ENCODE measurements at regions of chr14 and their contacts with region 1.

Region 1: GRCh38 chr14:24332268-24332993 is 2.4 kb downstream of the ADCY4 start:
- DNase-seq: peak; percentile 74 to 95 (median 84)
- ATAC-seq: peak; percentile 87
- H3K4me3 ChIP-seq: peak overlapping the region; percentile 43 to 48
- H3K4me3 Mint-ChIP-seq: peak overlapping the region; percentile 88
- H3K27ac ChIP-seq: no peak overlapping the region
- H3K27ac Mint-ChIP-seq: peak overlapping the region; percentile 70
- H3K4me1 ChIP-seq: peaks cover 60% of the 10 kb centered on the region
- H3K4me1 Mint-ChIP-seq: peaks cover 66% of the 10 kb centered on the region
- H3K27me3 ChIP-seq: peaks cover 7 to 23% of the 10 kb centered on the region in 2 experiments
- H3K27me3 Mint-ChIP-seq: peaks cover 26% of the 10 kb centered on the region
- CTCF ChIP-seq: peak; percentile 76

Region 2: DNA sequence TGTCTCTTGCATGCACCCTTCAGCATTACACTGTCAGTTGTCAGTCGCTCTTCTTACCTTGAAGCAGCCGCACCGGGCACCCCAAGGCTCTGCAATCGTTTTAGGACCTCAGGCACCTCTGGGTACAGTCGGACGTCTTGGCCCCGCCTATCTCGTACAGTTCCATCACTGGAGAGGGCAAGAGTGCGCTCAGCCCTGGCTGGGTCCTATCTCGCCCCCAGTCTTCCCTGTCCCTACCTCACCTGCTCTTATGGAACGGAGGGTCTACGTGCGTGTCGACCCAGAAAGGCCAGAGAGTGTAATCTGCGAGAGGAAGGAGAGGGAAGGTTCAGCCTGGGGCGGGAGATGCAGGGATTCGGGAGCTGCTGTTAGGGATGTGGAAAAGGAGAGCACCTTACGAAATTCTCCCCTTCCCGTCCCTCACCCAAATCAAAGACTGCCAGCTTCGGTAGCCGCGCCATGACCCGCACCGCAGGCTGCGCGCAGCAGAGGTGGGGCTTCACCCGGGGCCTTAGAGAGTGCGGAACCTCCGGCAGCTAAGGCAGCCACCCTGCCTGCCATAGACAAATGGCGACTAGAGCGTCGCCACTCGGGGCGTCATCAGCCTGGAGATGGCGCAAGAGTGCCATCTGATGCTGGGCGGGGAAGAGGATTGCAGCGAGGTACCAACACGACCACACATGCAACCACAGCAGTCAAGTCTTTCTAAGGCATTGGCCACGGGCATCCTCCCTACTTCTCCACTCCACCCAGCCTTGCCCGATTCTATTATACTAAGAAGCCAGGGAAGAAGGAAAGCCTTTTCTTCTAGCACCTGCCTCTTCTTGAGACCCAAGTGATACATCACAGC is 116.7 kb before region 1 on chr14 and contains the start of gene MDP1:
- CTCF ChIA-PET with region 1: interaction called, 9 read pairs
- POLR2A ChIA-PET with region 1: no interaction called
- intact Hi-C with region 1: loop called in 1 of 2 experiments (anchors 1 kb)
- DNase-seq: peak; percentile 75 to 96 (median 88)
- ATAC-seq: peak; percentile 72
- H3K4me3 ChIP-seq: peak within 1 kb of the TSS; percentile 86 to 95
- H3K4me3 Mint-ChIP-seq: peak within 1 kb of the TSS; percentile 93
- H3K27ac ChIP-seq: peak within 1 kb of the TSS; percentile 87 to 97
- H3K27ac Mint-ChIP-seq: peak within 1 kb of the TSS; percentile 99
- H3K4me1 ChIP-seq: peaks cover 32% of the 10 kb centered on the region
- H3K4me1 Mint-ChIP-seq: peaks cover 52% of the 10 kb centered on the region
- H3K27me3 ChIP-seq: no peaks in the 10 kb centered on the region
- H3K27me3 Mint-ChIP-seq: no peaks in the 10 kb centered on the region
- CTCF ChIP-seq: peak; percentile 63
- total RNA-seq, gene MDP1: 4.2 to 4.5 TPM

Region 3: GRCh38 chr14:24299255-24300195 is 32.9 kb before region 1 on chr14 and contains the starts of genes DHRS1 and NOP9:
- CTCF ChIA-PET with region 1: interaction called, 25 read pairs
- POLR2A ChIA-PET with region 1: interaction called, 3 read pairs
- intact Hi-C with region 1: loop called in 1 of 2 experiments (anchors 2 kb)
- DNase-seq: peak; percentile 82 to 98 (median 92)
- ATAC-seq: peak; percentile 78
- H3K4me3 ChIP-seq: peak within 1 kb of the TSS; percentile 80 to 83
- H3K4me3 Mint-ChIP-seq: peak within 1 kb of the TSS; percentile 94
- H3K27ac ChIP-seq: peak within 1 kb of the TSS; percentile 80 to 85
- H3K27ac Mint-ChIP-seq: peak within 1 kb of the TSS; percentile 96
- H3K4me1 ChIP-seq: peaks cover 28% of the 10 kb centered on the region
- H3K4me1 Mint-ChIP-seq: peaks cover 51% of the 10 kb centered on the region
- H3K27me3 ChIP-seq: no peaks in the 10 kb centered on the region
- H3K27me3 Mint-ChIP-seq: no peaks in the 10 kb centered on the region
- CTCF ChIP-seq: no peak
- total RNA-seq, gene DHRS1: 24.3 to 28.5 TPM
- total RNA-seq, gene NOP9: 35.6 to 35.8 TPM

Region 4: GRCh38 chr14:24347134-24347533 is 14.7 kb after region 1 on chr14:
- CTCF ChIA-PET with region 1: interaction called, 12 read pairs
- POLR2A ChIA-PET with region 1: no interaction called
- intact Hi-C with region 1: no loop called
- DNase-seq: no peak
- ATAC-seq: no peak
- H3K4me3 ChIP-seq: no peak overlapping the region
- H3K4me3 Mint-ChIP-seq: no peak overlapping the region
- H3K27ac ChIP-seq: no peak overlapping the region
- H3K27ac Mint-ChIP-seq: no peak overlapping the region
- H3K4me1 ChIP-seq: no peaks in the 10 kb centered on the region
- H3K4me1 Mint-ChIP-seq: no peaks in the 10 kb centered on the region
- H3K27me3 ChIP-seq: peaks cover 3 to 4% of the 10 kb centered on the region in 2 experiments
- H3K27me3 Mint-ChIP-seq: peaks cover 49% of the 10 kb centered on the region
- CTCF ChIP-seq: no peak

Region 5: GRCh38 chr14:24411443-24412389 is 79.3 kb after region 1 on chr14:
- CTCF ChIA-PET with region 1: interaction called, 15 read pairs
- POLR2A ChIA-PET with region 1: no interaction called
- intact Hi-C with region 1: no loop called
- DNase-seq: peak in 3 of 9 experiments; percentile 35 to 59 (median 51)
- ATAC-seq: peak; percentile 59
- H3K4me3 ChIP-seq: no peak overlapping the region
- H3K4me3 Mint-ChIP-seq: no peak overlapping the region
- H3K27ac ChIP-seq: no peak overlapping the region
- H3K27ac Mint-ChIP-seq: no peak overlapping the region
- H3K4me1 ChIP-seq: no peaks in the 10 kb centered on the region
- H3K4me1 Mint-ChIP-seq: no peaks in the 10 kb centered on the region
- H3K27me3 ChIP-seq: no peaks in the 10 kb centered on the region
- H3K27me3 Mint-ChIP-seq: peaks cover 5% of the 10 kb centered on the region
- CTCF ChIP-seq: peak; percentile 50

Region 6: GRCh38 chr14:24431569-24432258 is 99.3 kb after region 1 on chr14:
- CTCF ChIA-PET with region 1: interaction called, 442 read pairs
- POLR2A ChIA-PET with region 1: interaction called, 75 read pairs
- intact Hi-C with region 1: loop called (anchors 1 kb)
- DNase-seq: peak; percentile 77 to 94 (median 90)
- ATAC-seq: peak; percentile 52
- H3K4me3 ChIP-seq: peak overlapping the region in 1 of 2 experiments; percentile 71
- H3K4me3 Mint-ChIP-seq: peak overlapping the region; percentile 93
- H3K27ac ChIP-seq: peak overlapping the region; percentile 31 to 90
- H3K27ac Mint-ChIP-seq: peak overlapping the region; percentile 98
- H3K4me1 ChIP-seq: peaks cover 47% of the 10 kb centered on the region
- H3K4me1 Mint-ChIP-seq: peaks cover 45% of the 10 kb centered on the region
- H3K27me3 ChIP-seq: no peaks in the 10 kb centered on the region
- H3K27me3 Mint-ChIP-seq: no peaks in the 10 kb centered on the region
- CTCF ChIP-seq: peak; percentile 83

Measured in CD8-positive, alpha-beta T cell (primary cell).